ENCODE measurements at regions of chr11 and their contacts with region 1.

Region 1: DNA sequence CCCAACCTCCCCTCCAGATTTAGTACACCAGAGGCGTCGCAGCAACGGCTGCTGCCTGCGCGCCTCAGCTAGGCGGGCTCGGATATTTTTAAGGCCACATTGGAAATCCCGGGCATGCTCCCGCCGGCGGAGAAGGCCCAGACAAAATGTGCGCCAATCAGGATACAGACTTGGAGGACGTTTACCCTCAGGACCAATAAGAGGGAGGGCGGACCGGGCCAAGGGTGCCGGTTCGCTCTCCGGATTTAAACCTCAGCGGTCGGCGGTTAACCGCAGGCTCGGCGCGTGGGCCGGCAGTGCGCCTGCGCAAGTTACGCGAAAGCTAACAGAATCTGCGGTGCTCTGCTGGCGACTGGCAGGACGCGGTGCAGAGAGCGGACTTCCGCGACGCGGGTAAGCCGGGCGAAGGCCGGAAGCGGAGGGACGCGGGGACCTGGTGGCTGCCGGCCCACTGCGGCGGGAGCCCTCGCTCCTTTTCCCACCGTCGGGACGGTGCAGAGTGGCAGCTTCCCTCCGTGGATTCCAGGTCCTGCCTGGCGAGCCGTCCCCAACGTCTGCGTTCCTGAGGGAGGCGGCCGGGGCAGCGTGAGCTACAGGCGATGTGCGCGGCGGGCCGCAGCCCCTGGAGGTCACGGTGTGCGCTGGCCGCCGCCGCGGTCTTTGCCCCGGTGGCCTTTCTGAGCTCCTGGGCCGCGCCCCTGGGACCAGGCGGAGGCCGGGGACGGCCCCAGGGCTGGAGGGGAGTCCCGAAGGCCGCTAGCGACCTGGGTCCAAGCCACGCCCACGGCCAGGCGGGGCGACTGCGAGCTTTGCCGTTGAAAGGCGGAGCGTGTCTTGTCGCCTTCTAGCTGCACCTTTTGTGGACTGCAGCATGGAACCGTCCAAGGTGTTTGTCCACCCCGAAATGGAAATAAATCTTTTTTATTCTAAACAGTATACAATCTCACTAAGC is at the start of gene HYLS1:
- DNase-seq: peak; percentile 94
- ATAC-seq: peak; percentile 91
- total RNA-seq, gene HYLS1: 4.9 to 5.1 TPM

Region 2: DNA sequence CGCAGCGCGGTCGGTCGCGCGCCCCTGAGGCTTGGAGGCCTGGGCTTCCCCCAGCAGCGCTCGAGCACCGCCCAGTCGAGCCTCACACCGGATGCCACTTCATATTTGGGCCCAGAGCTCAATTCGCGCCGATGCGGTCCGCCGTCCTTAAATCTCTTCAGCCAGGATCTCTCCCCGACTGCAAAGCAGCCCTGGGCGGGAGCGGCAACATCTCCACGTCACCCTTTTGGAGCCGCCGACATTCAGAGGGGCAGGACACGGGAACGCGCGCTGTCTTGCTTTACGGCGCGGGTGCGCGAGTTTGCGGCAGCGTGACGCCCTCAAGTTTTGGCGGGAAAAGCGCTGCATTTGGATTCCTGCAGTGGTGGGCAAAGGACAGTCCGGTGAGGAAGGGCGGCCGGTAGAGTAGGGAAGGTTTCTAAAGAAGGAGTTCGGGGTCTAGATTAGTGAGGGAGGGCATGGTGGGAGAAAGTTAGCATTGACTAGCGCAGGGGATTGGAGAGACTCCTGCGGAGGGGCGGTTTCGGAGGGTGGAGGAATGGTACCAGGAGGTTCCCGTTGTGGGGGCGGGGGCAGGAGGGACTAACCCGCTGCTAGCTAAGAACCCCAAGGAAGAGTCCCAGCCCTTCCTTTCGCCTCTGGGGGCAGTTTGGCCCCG is 261.9 kb before region 1 on chr11:
- intact Hi-C with region 1: loop called in 1 of 2 experiments (anchors 10 kb)
- DNase-seq: peak; percentile 84 to 92
- ATAC-seq: peak; percentile 89